ENCODE measurements at regions of chr6 and their contacts with region 1.

Region 1: GRCh38 chr6:89638320-89639195 is at the start of gene LYRM2:
- DNase-seq: peak; percentile 89
- ATAC-seq: peak; percentile 93
- H3K4me3 Mint-ChIP-seq: peak within 1 kb of the TSS; percentile 90
- H3K27ac Mint-ChIP-seq: peak within 1 kb of the TSS; percentile 92
- H3K4me1 Mint-ChIP-seq: peaks cover 28% of the 10 kb centered on the region
- H3K27me3 Mint-ChIP-seq: no peaks in the 10 kb centered on the region
- CTCF ChIP-seq: no peak
- total RNA-seq, gene LYRM2: 41.9 and 44.9 TPM in 2 replicates

Region 2: DNA sequence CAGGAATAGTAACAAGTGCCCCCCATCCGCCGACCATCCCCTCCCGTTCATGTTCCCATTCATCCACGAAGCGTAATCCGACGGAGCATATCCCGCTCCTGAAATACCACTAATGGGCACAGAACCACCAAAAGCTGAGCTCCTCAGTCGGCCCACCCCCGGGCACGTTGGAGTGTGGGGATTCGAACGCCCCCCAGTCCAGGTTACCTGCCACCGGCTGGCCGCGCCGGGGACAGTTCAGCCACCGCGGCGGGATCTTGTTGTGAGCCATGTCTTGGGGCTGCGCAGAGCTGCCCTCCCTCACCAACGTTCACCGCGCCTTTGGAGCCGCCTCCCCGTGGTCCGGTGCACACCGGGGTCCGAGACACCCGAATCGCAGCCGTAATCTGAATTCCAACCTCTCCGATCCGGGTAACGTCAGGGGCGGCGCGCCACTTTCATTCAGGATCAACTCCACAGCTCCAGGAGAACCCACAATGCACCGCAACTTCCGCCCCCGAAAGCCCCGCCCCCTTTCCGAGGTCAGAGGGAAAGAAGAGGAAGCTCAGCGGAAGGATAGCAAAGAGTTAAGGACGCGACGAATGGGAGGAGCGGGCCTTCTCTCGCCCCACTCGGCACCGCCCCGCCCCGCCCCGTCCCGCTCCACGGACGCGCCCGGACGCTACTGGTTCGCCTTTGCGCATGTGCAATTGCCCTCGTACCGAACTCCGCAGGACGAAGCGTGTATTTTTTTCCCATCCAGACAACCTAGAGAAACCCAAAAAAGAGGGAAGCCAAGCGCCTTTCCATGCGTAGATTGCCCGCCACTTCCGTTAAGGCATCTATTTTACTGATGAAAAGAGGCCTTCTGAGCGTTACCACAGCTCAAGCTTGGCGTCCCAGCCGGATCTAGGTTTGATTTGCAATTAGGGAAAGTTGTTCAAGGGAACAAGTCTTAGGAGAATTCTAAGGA is 675.1 kb before region 1 on chr6 and contains the start of gene RNGTT:
- CTCF ChIA-PET with region 1: no interaction called
- POLR2A ChIA-PET with region 1: interaction called, 10 read pairs
- intact Hi-C with region 1: loop called (anchors 1 kb)
- DNase-seq: peak; percentile 96
- ATAC-seq: peak; percentile 100
- H3K4me3 Mint-ChIP-seq: peak within 1 kb of the TSS; percentile 99
- H3K27ac Mint-ChIP-seq: peak within 1 kb of the TSS; percentile 95
- H3K4me1 Mint-ChIP-seq: peaks cover 42% of the 10 kb centered on the region
- H3K27me3 Mint-ChIP-seq: no peaks in the 10 kb centered on the region
- CTCF ChIP-seq: no peak
- total RNA-seq, gene RNGTT: 24.8 and 25.9 TPM in 2 replicates

Region 3: GRCh38 chr6:89352278-89353117 is 286.1 kb before region 1 on chr6 and contains the start of gene UBE2J1:
- CTCF ChIA-PET with region 1: no interaction called
- POLR2A ChIA-PET with region 1: interaction called, 7 read pairs
- intact Hi-C with region 1: loop called (anchors 1 kb)
- DNase-seq: peak; percentile 83
- ATAC-seq: peak; percentile 77
- H3K4me3 Mint-ChIP-seq: peak within 1 kb of the TSS; percentile 94
- H3K27ac Mint-ChIP-seq: peak within 1 kb of the TSS; percentile 94
- H3K4me1 Mint-ChIP-seq: peaks cover 86% of the 10 kb centered on the region
- H3K27me3 Mint-ChIP-seq: no peaks in the 10 kb centered on the region
- CTCF ChIP-seq: no peak
- total RNA-seq, gene UBE2J1: 32.3 and 32.8 TPM in 2 replicates

Region 4: GRCh38 chr6:89432875-89433251 is 205.7 kb before region 1 on chr6 and contains the start of gene ANKRD6:
- CTCF ChIA-PET with region 1: interaction called, 7 read pairs
- POLR2A ChIA-PET with region 1: interaction called, 6 read pairs
- intact Hi-C with region 1: loop called (anchors 1 kb)
- DNase-seq: peak; percentile 95
- ATAC-seq: peak; percentile 97
- H3K4me3 Mint-ChIP-seq: peak within 1 kb of the TSS; percentile 86
- H3K27ac Mint-ChIP-seq: peak within 1 kb of the TSS; percentile 41
- H3K4me1 Mint-ChIP-seq: peaks cover 11% of the 10 kb centered on the region
- H3K27me3 Mint-ChIP-seq: peaks cover 4% of the 10 kb centered on the region
- CTCF ChIP-seq: no peak
- total RNA-seq, gene ANKRD6: 6.6 and 9.6 TPM in 2 replicates

Region 5: DNA sequence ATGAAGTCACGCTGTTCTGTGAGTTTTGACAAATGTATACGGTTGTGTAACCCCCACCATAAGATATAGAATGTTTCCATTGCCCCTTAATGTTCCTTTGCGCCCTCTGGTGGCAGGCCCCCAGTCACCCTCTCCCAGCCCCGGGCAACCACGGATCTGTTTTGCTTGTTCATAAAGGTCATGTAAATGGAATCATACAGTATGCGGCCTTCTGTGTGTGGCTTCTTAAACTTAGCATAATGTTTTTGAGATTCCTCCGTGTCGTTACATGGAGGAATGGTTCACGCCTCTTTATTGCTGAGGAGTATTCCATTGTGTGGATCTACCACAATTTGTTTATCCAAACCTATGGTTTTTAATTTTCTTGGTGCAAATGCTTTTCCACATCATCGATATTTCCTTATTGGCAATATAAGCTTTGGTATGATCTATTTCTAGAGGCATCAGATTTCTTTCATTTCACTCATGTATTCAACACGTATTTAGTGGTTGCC is 28.4 kb before region 1 on chr6:
- CTCF ChIA-PET with region 1: no interaction called
- POLR2A ChIA-PET with region 1: interaction called, 5 read pairs
- intact Hi-C with region 1: loop called (anchors 1 kb)
- DNase-seq: peak; percentile 67
- ATAC-seq: peak; percentile 81
- H3K4me3 Mint-ChIP-seq: no peak overlapping the region
- H3K27ac Mint-ChIP-seq: no peak overlapping the region
- H3K4me1 Mint-ChIP-seq: no peaks in the 10 kb centered on the region
- H3K27me3 Mint-ChIP-seq: no peaks in the 10 kb centered on the region
- CTCF ChIP-seq: peak; percentile 57

Region 6: DNA sequence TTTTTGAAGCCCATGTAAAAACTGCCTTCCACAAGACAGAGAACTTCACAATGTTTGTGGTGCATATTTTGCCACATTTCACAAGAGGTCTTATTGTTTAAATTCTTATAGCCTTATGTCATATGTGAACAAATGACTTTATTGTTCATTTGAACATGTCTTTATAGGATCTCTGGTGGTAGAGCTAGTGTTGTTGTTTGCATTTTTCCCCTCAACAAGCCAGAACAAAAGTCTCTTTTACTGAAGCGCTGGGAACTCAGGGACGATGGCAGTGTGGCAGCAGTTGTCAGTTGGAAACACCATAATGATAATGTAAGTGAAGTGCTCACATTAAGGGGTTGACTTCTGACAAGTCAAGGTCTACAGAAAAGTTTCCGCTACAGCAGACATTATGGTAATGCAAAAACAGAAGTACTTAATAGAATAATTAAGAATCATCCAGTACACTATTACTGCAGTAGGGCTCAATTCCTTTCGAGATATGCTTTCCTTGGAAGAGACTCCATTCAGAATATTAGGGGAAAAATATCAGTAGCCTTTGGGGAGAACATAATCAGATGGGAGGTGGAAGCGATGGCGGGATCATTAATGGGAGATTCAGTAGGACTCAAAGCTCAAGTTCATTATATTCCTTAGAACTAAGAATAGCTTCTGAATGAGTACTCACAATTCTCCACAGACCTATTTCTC is 435.7 kb after region 1 on chr6:
- CTCF ChIA-PET with region 1: no interaction called
- POLR2A ChIA-PET with region 1: no interaction called
- intact Hi-C with region 1: no loop called
- DNase-seq: no peak
- ATAC-seq: no peak
- H3K4me3 Mint-ChIP-seq: peak overlapping the region; percentile 30
- H3K27ac Mint-ChIP-seq: peak overlapping the region; percentile 77
- H3K4me1 Mint-ChIP-seq: peaks cover 87% of the 10 kb centered on the region
- H3K27me3 Mint-ChIP-seq: no peaks in the 10 kb centered on the region
- CTCF ChIP-seq: no peak

Region 7: DNA sequence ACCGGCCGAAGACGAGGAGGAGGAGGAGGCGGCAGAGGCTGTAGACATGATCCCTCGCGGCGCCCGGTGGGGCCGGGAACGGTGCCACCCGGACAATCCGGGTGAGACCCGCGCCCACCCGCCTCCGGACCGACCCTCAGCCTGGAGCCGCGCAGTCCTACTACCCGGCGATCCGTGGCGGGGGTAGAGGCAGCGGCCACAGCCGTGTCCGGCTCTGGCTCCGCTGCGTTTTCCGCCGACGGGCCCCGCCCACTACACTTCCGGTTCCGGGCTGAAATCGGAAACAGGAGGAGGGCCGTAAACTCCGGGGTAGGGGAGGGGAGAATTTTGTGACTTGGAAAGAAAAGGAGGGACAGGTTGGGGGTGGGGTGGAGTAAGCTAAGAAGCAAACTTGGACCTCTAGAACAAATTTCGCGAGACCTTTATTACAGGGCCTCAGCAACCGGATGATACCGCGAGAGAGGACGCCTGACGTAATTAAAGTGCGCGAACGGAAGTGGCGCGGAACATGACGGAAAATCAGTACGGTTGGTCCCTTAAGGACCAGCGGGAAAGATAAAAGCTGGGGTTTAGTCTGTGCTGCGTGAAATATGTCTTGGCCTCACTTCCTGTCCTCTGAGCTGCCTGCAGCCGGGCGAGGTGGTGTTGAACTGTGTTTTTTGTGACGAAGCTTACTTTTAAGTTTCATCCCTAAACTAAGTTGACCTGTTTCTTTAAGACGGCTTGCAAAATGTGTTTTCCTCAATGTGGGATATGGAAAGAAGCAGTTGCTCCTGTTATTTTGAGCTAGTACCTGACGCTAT is 948.5 kb after region 1 on chr6 and contains the start of gene MAP3K7:
- CTCF ChIA-PET with region 1: no interaction called
- POLR2A ChIA-PET with region 1: no interaction called
- intact Hi-C with region 1: loop called (anchors 2 kb)
- DNase-seq: peak; percentile 91
- ATAC-seq: peak; percentile 86
- H3K4me3 Mint-ChIP-seq: peak within 1 kb of the TSS; percentile 94
- H3K27ac Mint-ChIP-seq: peak within 1 kb of the TSS; percentile 99
- H3K4me1 Mint-ChIP-seq: peaks cover 41% of the 10 kb centered on the region
- H3K27me3 Mint-ChIP-seq: peaks cover 7% of the 10 kb centered on the region
- CTCF ChIP-seq: no peak
- total RNA-seq, gene MAP3K7: 23.8 and 27.2 TPM in 2 replicates

Measured in activated B cell treated with CpG ODN at 0.5 μM for 24 hours (primary cell).